Activated T-helper 2 cell treated with anti-CD3 and anti-CD28 coated beads, Interferon-gamma antibody, Interleukin-2, Interleukin-4, amounts not matched to agents 10 μg/mL and 5 μg/mL and 100 μg/mL, durations not matched to agents 14 hours and 24 hours and 36 hours (primary cell): ENCODE measurements at regions of chr19 and their contacts with region 1.

Region 1: DNA sequence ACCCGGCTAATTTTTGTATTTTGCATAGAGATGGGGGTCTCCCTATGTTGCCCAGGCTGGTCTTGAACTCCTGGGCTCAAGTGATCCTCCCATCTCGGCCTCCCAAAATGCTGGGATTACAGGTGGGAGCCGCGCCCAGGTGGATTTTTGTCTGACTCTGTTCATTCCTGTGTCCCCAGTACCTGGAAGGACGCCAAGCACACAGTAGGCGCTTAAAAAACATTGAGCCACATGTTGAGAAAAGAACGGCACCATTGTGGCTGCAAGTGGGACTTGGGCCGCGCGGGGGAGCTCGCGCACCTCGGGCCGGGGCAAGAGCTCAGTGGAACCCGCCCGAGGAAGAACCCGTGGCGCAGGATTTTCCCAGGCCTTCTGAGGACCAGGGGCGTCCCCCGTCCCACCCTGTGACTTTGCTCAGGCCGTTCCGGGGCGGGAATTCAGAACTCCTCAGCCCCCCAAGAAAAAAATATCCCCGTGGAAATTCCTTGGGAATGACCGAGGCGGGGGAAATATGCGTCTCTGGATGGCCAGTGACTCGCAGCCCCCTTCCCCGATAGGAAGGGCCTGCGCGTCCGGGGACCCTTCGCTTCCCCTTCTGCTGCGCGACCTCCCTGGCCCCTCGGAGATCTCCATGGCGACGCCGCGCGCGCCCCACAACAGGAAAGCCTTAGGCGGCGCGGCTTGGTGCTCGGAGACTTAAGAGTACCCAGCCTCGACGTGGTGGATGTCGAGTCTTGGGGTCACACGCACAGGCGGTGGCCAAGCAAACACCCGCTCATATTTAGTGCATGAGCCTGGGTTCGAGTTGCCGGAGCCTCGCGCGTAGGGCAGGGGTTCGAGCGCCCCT is 1.4 kb upstream of the ICAM1 start:
- DNase-seq: peak; percentile 84
- H3K4me3 Mint-ChIP-seq: peak overlapping the region; percentile 87
- H3K27ac Mint-ChIP-seq: peak overlapping the region; percentile 94
- H3K4me1 Mint-ChIP-seq: peaks cover 17% of the 10 kb centered on the region
- H3K27me3 Mint-ChIP-seq: no peaks in the 10 kb centered on the region

Region 2: GRCh38 chr19:10286803-10287737 is 17.5 kb after region 1 on chr19 and contains the start of gene ICAM4:
- intact Hi-C with region 1: loop called (anchors 2 kb)
- DNase-seq: peak; percentile 56
- H3K4me3 Mint-ChIP-seq: peak within 1 kb of the TSS; percentile 56
- H3K27ac Mint-ChIP-seq: peak within 1 kb of the TSS; percentile 7
- H3K4me1 Mint-ChIP-seq: peaks cover 59% of the 10 kb centered on the region
- H3K27me3 Mint-ChIP-seq: peaks cover 26% of the 10 kb centered on the region
- total RNA-seq, gene ICAM4: 1.4 and 1.6 TPM in 2 replicates

Region 3: GRCh38 chr19:10380313-10381102 is 111.0 kb after region 1 on chr19 and contains the start of gene TYK2:
- intact Hi-C with region 1: loop called (anchors 2 kb)
- DNase-seq: peak; percentile 98
- H3K4me3 Mint-ChIP-seq: peak within 1 kb of the TSS; percentile 88
- H3K27ac Mint-ChIP-seq: peak within 1 kb of the TSS; percentile 88
- H3K4me1 Mint-ChIP-seq: peaks cover 16% of the 10 kb centered on the region
- H3K27me3 Mint-ChIP-seq: no peaks in the 10 kb centered on the region
- total RNA-seq, gene TYK2: 250 TPM in 2 replicates

Region 4: GRCh38 chr19:10388957-10389356 is 119.4 kb after region 1 on chr19:
- intact Hi-C with region 1: loop called (anchors 1 kb)
- DNase-seq: peak; percentile 69
- H3K4me3 Mint-ChIP-seq: no peak overlapping the region
- H3K27ac Mint-ChIP-seq: no peak overlapping the region
- H3K4me1 Mint-ChIP-seq: peaks cover 5% of the 10 kb centered on the region
- H3K27me3 Mint-ChIP-seq: no peaks in the 10 kb centered on the region

Region 5: DNA sequence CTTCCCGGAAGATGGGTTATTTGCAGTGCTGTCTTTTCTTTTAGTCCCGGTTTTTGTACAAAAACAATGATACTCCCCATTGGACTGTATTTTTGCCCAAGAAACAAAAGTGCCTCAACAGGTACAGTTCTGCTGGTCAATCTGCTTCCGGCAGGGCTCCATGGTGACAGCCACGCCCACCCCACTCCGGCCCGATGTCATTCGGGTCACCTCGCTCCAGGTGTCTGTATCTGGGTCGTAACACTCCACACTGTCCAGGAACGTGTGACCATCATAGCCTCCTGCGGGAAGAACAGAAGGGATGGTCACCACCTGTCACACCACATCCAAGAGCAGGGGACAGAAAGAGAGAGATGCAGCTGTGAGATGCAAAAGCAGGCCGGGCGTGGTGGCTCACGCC is 217.0 kb after region 1 on chr19:
- intact Hi-C with region 1: no loop called
- DNase-seq: no peak
- H3K4me3 Mint-ChIP-seq: no peak overlapping the region
- H3K27ac Mint-ChIP-seq: no peak overlapping the region
- H3K4me1 Mint-ChIP-seq: peaks cover 7% of the 10 kb centered on the region
- H3K27me3 Mint-ChIP-seq: no peaks in the 10 kb centered on the region